Vagina (tissue), 2 donors: ENCODE measurements at regions of chr5 and their contacts with region 1.

Region 1: GRCh38 chr5:160021831-160022446 is 13.0 kb downstream of the TTC1 start:
- DNase-seq: no peak
- H3K4me3 ChIP-seq: no peak overlapping the region
- H3K27ac ChIP-seq: no peak overlapping the region
- H3K4me1 ChIP-seq: peaks cover 6% of the 10 kb centered on the region
- H3K27me3 ChIP-seq: no peaks in the 10 kb centered on the region
- CTCF ChIP-seq: peak; percentile 72 to 87 (median 83)
- POLR2A ChIP-seq: no peak

Region 2: GRCh38 chr5:159797261-159797970 is 224.5 kb before region 1 on chr5:
- intact Hi-C with region 1: no loop called
- DNase-seq: peak in 1 of 2 donors; percentile 65
- H3K4me3 ChIP-seq: no peak overlapping the region
- H3K27ac ChIP-seq: no peak overlapping the region
- H3K4me1 ChIP-seq: no peaks in the 10 kb centered on the region
- H3K27me3 ChIP-seq: no peaks in the 10 kb centered on the region
- CTCF ChIP-seq: no peak
- POLR2A ChIP-seq: no peak

Region 3: DNA sequence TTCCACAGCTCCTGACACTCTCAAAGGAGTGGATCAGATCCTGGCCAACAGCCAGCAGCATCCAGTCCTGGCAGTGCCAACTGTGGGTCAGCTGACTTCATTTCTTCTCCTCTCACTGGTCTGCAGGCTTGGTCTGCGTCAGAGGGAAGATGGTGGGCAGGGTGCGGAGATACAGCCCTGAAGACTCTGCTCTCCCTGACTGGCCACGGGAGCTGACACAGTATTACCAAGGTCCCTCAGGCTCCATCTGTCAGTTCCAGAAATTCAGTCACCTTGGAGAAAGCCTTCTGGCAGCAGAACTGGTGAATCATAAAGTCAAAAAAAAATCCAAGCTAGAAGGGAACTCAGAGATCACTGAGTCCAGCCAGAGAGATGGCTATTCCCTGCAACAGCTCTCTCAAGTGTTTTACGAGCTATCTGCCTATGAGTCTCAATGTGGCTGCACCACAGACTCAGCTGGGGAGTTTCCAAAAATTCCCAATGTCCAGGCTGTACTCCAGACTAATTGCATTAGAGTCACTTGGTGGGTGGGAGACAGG is 320.5 kb after region 1 on chr5:
- intact Hi-C with region 1: loop called (anchors 5 kb)
- DNase-seq: no peak
- H3K4me3 ChIP-seq: no peak overlapping the region
- H3K27ac ChIP-seq: peak overlapping the region; percentile 20
- H3K4me1 ChIP-seq: no peaks in the 10 kb centered on the region
- H3K27me3 ChIP-seq: no peaks in the 10 kb centered on the region
- CTCF ChIP-seq: no peak
- POLR2A ChIP-seq: no peak

Region 4: GRCh38 chr5:160382346-160382745 is 360.4 kb after region 1 on chr5:
- intact Hi-C with region 1: loop called (anchors 10 kb)
- DNase-seq: no peak
- H3K4me3 ChIP-seq: no peak overlapping the region
- H3K27ac ChIP-seq: no peak overlapping the region
- H3K4me1 ChIP-seq: no peaks in the 10 kb centered on the region
- H3K27me3 ChIP-seq: no peaks in the 10 kb centered on the region
- CTCF ChIP-seq: no peak
- POLR2A ChIP-seq: no peak